ENCODE measurements at regions of chr14 and their contacts with region 1.

Region 1: DNA sequence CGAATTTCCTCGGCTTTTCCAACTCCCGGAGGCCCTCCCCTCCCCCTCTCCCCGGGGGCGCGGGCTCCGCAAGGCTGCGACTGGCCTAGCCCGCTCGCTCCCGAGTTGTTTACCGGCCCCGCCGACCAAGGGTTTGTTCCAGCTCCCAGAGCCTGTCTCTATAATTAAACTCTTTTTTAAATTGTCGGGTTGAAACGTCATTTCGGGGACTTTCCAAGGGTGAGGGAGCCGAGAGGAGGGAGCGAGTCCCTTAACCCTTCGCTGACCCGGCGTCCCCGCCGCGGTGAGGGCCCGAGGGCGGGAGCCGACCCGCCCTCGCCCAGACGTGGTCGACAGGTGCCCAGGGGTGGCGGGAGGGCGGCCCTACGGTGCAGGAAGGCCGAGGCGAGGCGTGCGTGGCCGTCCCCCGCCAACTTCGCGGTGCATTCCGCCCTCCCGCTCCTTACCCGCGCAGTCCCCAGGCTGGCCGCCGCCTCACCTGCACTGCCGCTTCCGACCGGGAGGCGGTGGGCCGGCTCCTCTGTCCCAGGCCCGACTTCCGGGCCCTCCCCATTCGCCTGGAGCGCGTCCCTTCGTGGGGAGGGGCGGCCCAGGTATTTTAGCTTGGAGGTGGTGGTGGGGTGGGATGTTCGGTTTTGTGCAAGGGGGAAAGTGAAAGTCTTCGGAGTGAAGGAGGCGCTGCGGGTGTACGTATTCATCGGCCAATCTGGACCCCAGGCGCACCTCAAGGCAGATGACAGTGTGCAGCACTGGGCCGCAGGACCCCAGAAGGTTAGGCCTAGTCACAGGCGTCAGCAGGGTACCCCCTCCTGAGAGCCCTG is 2.9 kb upstream of the ZFP36L1 start:
- DNase-seq: peak; percentile 90 to 93
- H3K4me3 ChIP-seq: peak overlapping the region; percentile 86
- H3K4me3 Mint-ChIP-seq: peak overlapping the region; percentile 88
- H3K27ac Mint-ChIP-seq: peak overlapping the region; percentile 96
- H3K4me1 ChIP-seq: peaks cover 10% of the 10 kb centered on the region
- H3K4me1 Mint-ChIP-seq: peaks cover 11% of the 10 kb centered on the region
- H3K27me3 ChIP-seq: no peaks in the 10 kb centered on the region
- H3K27me3 Mint-ChIP-seq: no peaks in the 10 kb centered on the region
- CTCF ChIP-seq: peak; percentile 68 to 81

Region 2: DNA sequence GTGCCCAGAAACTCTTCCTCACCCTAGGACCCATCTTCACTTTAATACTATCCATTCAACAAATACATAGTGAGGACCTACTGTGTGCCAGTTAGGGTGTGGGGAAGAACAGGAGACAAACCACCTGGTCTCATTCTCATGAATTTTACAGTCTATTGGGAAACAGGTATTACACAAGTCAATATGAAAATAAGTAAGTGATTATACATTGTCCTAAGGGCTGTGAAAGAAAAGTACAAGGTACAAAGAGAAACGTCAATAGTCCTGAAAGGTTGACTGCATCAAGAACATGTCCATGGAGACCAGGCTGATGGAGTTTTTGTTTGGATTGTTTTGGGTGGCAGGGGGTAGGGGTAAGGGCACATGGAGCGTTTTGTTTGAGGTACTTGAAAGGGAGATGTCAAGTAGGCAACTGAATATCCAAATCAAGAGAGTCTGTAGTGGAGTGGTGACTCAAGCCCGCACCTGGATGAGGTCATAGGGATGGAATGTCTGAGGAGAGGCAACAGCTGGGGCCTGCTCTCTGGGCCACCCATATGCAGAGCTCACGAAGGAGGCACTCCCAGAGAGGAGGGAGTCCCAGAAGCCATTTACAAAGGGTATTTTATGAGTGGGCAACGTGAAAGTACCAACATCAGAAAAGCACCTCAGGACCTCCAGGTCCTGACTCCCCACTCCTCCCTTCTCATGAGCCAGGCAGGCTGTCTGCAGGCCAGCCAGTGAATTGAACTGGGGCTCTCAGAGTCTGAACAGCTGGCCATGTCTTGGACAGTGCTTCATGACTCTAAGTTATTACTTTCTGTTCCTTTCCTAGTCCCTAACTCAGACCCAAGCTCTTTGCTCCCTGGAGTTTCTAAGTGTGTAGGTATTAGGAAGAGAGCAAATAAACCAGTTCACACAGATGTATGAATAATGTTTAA is 274.9 kb before region 1 on chr14:
- CTCF ChIA-PET with region 1: no interaction called
- POLR2A ChIA-PET with region 1: interaction called, 12 read pairs
- intact Hi-C with region 1: loop called (anchors 10 kb)
- DNase-seq: peak; percentile 84 to 92
- H3K4me3 ChIP-seq: no peak overlapping the region
- H3K4me3 Mint-ChIP-seq: peak overlapping the region; percentile 17
- H3K27ac Mint-ChIP-seq: peak overlapping the region; percentile 96
- H3K4me1 ChIP-seq: peaks cover 52% of the 10 kb centered on the region
- H3K4me1 Mint-ChIP-seq: peaks cover 41% of the 10 kb centered on the region
- H3K27me3 ChIP-seq: no peaks in the 10 kb centered on the region
- H3K27me3 Mint-ChIP-seq: no peaks in the 10 kb centered on the region
- CTCF ChIP-seq: no peak

Region 3: DNA sequence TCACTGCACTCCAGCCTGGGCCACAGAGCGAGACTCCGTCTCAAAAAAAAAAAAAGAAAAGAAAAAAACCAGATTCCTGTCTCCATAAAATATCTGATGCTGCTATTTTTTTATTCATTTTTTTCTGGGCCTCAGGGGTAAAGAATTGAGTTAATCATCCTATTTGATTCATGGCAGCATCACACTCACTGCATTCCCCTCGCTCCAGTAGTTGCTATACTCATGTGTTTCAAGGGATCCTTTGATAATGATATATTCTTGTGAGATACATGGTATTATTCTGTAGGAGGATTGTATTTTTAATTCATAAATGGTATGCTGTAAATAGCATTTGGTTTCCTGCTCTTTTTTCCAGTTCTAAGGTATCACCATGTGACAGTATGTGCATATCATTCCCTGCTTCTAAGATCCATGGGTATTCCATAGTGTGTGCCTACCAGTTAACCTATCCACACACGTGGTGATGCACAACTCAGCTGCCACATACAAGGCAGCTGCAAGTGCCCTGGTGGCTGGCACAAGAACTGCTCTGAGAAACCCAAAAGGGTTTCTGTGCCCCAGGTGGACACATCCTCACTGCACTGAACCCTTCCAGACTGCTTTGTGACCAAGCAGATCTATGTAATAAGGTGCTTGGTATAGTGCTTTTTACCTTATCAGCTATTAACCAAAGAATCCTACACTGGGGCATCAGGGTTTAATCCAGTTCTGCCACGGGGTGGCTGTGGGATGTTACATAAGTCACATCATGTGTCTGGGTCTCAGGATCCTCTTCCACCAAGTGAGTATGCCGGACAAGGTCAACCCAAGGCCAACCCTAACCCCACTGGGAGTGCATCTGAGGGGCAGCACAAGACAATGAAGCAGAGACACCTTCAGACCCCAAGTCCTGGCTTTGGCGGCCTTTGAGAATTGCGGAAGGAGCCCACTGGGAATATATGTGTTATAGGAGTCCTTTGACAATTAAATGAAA is 77.5 kb before region 1 on chr14:
- CTCF ChIA-PET with region 1: interaction called, 6 read pairs
- POLR2A ChIA-PET with region 1: interaction called, 3 read pairs
- intact Hi-C with region 1: loop called (anchors 2 kb)
- DNase-seq: no peak
- H3K4me3 ChIP-seq: no peak overlapping the region
- H3K4me3 Mint-ChIP-seq: no peak overlapping the region
- H3K27ac Mint-ChIP-seq: no peak overlapping the region
- H3K4me1 ChIP-seq: peaks cover 13% of the 10 kb centered on the region
- H3K4me1 Mint-ChIP-seq: peaks cover 5% of the 10 kb centered on the region
- H3K27me3 ChIP-seq: no peaks in the 10 kb centered on the region
- H3K27me3 Mint-ChIP-seq: no peaks in the 10 kb centered on the region
- CTCF ChIP-seq: peak in 1 of 2 experiments; percentile 17

Region 4: DNA sequence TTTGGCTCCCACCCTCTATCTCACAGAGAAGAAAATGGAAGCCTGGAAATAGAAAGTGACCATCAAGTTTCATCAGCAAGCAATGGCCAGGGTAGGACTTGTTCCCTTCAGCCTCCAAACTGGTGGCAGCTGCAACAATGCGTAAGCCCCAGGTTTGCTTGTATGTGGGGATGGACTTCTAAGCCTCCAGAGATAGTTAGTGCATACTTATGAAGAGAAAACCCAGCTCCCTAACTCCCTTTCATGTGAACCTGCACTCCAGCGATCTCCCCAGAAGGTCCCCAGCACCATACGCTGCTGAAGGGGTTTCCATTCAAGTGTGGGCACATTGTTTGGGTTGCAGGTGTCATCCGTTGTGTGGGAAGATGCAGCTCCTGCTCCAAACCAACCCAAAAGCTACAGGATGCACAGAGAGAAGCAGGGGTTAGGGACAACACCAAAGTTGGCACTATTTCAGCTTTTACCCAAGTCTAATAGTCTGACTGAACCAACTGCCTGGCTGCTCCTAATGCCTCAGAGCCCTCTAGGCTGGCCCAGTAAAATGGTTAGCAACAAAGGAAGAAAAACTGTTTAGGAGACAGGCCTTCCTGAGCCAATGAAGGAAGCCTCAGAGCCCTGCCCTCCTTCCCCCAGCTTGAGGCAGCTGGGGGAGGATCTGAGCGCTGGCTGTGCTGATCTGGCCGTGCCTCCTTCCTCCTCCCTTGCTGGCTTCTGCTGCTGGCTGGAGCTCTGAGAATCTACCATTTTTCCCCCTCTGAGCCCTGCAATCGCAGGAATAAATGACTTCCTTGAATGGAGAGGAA is 15.2 kb before region 1 on chr14:
- CTCF ChIA-PET with region 1: interaction called, 5 read pairs
- POLR2A ChIA-PET with region 1: interaction called, 70 read pairs
- intact Hi-C with region 1: loop called (anchors 1 kb)
- DNase-seq: peak; percentile 21 to 35
- H3K4me3 ChIP-seq: no peak overlapping the region
- H3K4me3 Mint-ChIP-seq: peak overlapping the region; percentile 21
- H3K27ac Mint-ChIP-seq: peak overlapping the region; percentile 79
- H3K4me1 ChIP-seq: peaks cover 78% of the 10 kb centered on the region
- H3K4me1 Mint-ChIP-seq: peaks cover 39% of the 10 kb centered on the region
- H3K27me3 ChIP-seq: no peaks in the 10 kb centered on the region
- H3K27me3 Mint-ChIP-seq: no peaks in the 10 kb centered on the region
- CTCF ChIP-seq: no peak

Region 5: DNA sequence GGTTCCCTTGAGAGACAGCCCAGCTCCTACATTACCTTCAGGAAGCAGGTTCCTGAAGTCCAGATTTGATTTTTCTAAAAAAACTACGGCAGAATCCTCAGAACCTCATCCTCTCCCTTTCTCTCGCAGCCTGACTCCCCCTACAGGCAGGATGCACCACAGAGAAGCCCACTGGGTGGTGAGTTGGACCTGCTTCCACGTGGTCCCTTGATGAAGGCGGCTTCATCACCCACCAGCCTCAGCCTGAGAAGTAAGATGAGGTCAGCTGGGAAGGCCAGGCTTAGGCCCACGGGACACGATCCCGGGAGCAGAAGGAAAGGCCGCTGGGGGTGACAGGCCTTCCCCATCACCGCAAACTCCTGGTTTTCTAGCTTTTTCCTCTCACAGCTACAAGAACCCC is 100.3 kb after region 1 on chr14:
- CTCF ChIA-PET with region 1: no interaction called
- POLR2A ChIA-PET with region 1: no interaction called
- intact Hi-C with region 1: no loop called
- DNase-seq: no peak
- H3K4me3 ChIP-seq: no peak overlapping the region
- H3K4me3 Mint-ChIP-seq: no peak overlapping the region
- H3K27ac Mint-ChIP-seq: no peak overlapping the region
- H3K4me1 ChIP-seq: no peaks in the 10 kb centered on the region
- H3K4me1 Mint-ChIP-seq: no peaks in the 10 kb centered on the region
- H3K27me3 ChIP-seq: no peaks in the 10 kb centered on the region
- H3K27me3 Mint-ChIP-seq: no peaks in the 10 kb centered on the region
- CTCF ChIP-seq: peak; percentile 33 to 41

Measured in Caco-2 (cell line).